ENCODE measurements at regions of chr12 and their contacts with region 1.

Region 1: DNA sequence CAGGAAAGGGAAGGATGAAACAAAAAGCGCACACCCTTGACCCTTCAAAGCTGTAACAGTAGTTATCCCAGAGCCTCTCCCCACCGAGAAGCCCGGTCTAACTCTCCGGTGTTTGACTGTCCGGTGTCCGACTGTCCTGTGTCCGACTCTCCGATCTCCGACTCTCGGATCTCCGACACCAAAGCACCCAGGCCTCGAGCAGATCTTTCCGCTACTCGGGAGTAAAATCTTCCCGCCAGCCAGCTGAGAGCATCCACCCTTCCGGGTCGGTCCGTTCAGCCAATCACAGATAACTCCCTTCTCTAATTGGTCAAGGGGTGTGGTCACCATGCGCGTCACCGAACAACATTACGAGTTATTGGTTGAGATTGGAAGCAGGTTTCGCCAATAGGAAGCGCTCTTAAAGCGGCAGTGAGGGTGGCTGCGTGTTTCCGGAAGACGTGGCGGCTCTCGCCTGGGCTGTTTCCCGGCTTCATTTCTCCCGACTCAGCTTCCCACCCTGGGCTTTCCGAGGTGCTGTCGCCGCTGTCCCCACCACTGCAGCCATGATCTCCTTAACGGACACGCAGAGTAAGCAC is at the starts of genes GOLT1B and RECQL:
- DNase-seq: peak; percentile 98
- ATAC-seq: peak; percentile 95
- H3K4me3 ChIP-seq: peak within 1 kb of the TSS; percentile 87 to 95 (median 95)
- H3K27ac ChIP-seq: peak within 1 kb of the TSS; percentile 90
- H3K4me1 ChIP-seq: peaks cover 33% of the 10 kb centered on the region
- H3K27me3 ChIP-seq: no peaks in the 10 kb centered on the region; a peak in 1 of 5 replicates
- CTCF ChIP-seq: no peak
- EP300 ChIP-seq: 0 out of 4 replicates have a peak, but pooled peaks of 1 of the 2 experiments have one; percentile 19
- POLR2A ChIP-seq: peak; percentile 48 to 92
- RAD21 ChIP-seq: no peak
- total RNA-seq, gene GOLT1B: 38.4 and 55.5 TPM in 2 replicates
- total RNA-seq, gene RECQL: 41.5 and 71.8 TPM in 2 replicates

Region 2: GRCh38 chr12:21308785-21309184 is 192.7 kb before region 1 on chr12:
- CTCF ChIA-PET with region 1: no interaction called
- POLR2A ChIA-PET with region 1: no interaction called
- in situ Hi-C with region 1: no loop called
- intact Hi-C with region 1: loop called (anchors 1 kb)
- DNase-seq: no peak
- ATAC-seq: no peak
- H3K4me3 ChIP-seq: no peak overlapping the region
- H3K27ac ChIP-seq: no peak overlapping the region
- H3K4me1 ChIP-seq: no peaks in the 10 kb centered on the region
- H3K27me3 ChIP-seq: no peaks in the 10 kb centered on the region
- CTCF ChIP-seq: no peak
- EP300 ChIP-seq: no peak
- POLR2A ChIP-seq: no peak
- RAD21 ChIP-seq: no peak

Region 3: DNA sequence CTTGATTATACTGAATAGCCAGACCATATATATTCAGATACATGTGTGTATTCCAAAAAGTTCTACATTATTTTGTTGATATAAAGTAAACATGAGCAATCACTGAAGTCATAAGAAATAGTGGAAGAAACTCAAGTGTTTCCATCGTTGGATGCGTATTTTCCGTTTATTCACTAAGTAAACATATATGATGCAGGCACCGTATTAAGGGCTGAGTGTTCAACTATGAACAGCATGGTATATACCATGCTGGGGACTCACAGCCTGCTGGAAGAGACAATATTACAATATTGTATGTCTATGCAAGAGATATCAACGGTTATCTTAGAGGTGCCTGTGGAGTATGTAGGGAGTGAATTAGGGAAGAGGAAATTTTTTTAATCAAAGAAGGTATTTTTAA is 62.8 kb before region 1 on chr12:
- CTCF ChIA-PET with region 1: no interaction called
- POLR2A ChIA-PET with region 1: interaction called, 7 read pairs
- in situ Hi-C with region 1: no loop called
- intact Hi-C with region 1: loop called (anchors 1 kb)
- DNase-seq: no peak
- ATAC-seq: no peak
- H3K4me3 ChIP-seq: peak overlapping the region; percentile 78 to 80 (median 79)
- H3K27ac ChIP-seq: no peak overlapping the region
- H3K4me1 ChIP-seq: peaks cover 19% of the 10 kb centered on the region
- H3K27me3 ChIP-seq: peaks cover 1 to 11% of the 10 kb centered on the region in 2 experiments; a peak in 2 of 5 replicates
- CTCF ChIP-seq: no peak
- EP300 ChIP-seq: no peak
- POLR2A ChIP-seq: no peak
- RAD21 ChIP-seq: no peak

Region 4: DNA sequence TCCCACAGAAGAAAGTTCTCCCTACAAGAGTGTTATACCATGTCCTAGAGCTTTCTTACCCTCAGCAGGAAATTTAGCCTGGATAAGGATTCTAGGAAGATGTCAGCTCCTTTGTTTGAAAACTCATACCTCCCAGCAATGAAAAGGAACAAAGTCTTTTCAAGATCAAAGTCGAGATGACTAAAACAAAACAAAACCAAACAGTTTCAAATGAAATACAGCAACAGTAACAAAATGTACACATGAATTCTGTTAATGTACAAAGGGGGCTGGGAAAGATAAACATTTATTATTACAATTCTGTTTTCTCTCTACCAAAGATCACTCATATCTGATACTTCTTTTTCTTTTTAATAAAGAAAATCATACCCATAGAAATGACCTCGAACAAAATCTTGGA is 61.4 kb after region 1 on chr12:
- CTCF ChIA-PET with region 1: no interaction called
- POLR2A ChIA-PET with region 1: no interaction called
- in situ Hi-C with region 1: no loop called
- intact Hi-C with region 1: loop called (anchors 2 kb)
- DNase-seq: peak; percentile 37
- ATAC-seq: peak; percentile 70
- H3K4me3 ChIP-seq: no peak overlapping the region; a peak in 2 of 6 replicates
- H3K27ac ChIP-seq: peak overlapping the region; percentile 66
- H3K4me1 ChIP-seq: peaks cover 60% of the 10 kb centered on the region
- H3K27me3 ChIP-seq: no peaks in the 10 kb centered on the region
- CTCF ChIP-seq: no peak
- EP300 ChIP-seq: peak in 1 of 2 experiments; percentile 81; a peak in 2 of 4 replicates
- POLR2A ChIP-seq: no peak
- RAD21 ChIP-seq: no peak

Region 5: DNA sequence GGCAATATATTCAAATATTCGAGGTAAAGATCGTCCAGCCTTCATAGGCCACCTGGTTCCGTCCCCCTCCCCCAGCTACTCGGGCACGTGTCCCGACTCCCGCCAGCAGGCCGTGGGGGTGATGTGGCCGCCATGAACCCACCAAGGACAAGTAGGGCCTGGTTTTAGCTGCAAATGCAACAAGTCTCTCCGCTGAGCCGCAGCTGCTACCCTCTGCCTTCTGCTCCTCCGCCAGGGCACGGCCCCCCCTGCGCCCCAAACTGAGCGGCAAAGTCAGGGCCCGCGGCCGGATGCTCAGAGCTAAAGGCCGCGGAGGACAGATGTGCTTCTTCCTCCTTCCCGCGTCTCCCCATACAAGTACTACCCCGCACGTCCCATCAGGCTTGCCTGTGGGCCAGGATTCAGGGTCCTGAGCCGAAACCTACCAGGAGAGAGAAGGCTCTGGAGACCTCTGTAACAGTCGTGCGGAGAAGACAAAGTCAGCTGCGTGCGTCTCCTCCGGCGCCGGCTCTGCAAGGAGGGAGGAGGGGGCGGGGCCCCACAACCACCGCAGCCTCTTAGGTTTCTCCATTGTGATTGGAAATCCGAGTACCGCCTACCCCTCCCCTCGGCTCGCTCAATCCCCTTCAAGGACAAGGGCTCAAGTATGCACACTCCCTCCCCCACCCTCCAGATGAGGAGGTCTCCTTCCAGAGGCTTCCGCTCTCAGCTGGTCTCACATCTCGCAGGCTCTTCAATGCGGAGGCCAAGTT is 156.0 kb after region 1 on chr12 and contains the start of gene LDHB:
- CTCF ChIA-PET with region 1: no interaction called
- POLR2A ChIA-PET with region 1: no interaction called
- in situ Hi-C with region 1: no loop called
- intact Hi-C with region 1: loop called (anchors 10 kb)
- DNase-seq: no peak
- ATAC-seq: no peak
- H3K4me3 ChIP-seq: no peak within 1 kb of the TSS
- H3K27ac ChIP-seq: no peak within 1 kb of the TSS
- H3K4me1 ChIP-seq: no peaks in the 10 kb centered on the region
- H3K27me3 ChIP-seq: no peaks in the 10 kb centered on the region
- CTCF ChIP-seq: no peak
- EP300 ChIP-seq: no peak
- POLR2A ChIP-seq: no peak
- RAD21 ChIP-seq: no peak
- total RNA-seq, gene LDHB: not detected in 2 replicates

Region 6: DNA sequence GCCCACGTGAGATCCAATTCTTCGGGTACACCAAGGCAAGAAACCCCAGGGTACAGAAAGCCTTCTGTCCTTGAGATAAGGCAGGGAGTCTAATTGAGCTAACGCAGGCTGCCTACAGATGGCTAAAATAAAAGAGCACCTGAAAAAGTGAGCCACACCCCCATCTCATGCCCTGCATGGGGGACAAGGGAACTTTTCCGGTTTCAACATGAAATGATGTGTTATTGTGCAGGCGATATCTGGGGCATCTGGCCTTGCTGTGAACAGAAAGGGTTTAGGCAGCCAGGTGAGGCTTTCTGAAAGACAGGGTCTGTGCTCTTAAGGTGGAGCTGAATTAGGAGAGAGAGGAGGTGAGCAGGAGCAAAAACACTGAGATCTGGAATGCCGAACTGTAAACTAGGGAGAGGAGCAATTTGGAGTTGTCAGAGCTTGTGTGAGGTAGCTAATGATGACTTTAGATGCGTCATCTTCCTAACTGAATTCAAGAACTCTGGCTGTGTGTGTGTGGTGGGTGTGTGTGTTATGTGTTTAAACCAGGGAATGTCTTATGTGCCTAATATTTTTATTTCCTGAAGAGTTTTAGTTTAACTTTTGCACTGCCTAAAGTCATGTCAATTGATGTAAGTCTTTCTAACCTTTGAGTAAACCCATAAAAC is 176.3 kb after region 1 on chr12:
- CTCF ChIA-PET with region 1: no interaction called
- POLR2A ChIA-PET with region 1: no interaction called
- in situ Hi-C with region 1: no loop called
- intact Hi-C with region 1: loop called (anchors 1 kb)
- DNase-seq: no peak
- ATAC-seq: no peak
- H3K4me3 ChIP-seq: no peak overlapping the region
- H3K27ac ChIP-seq: no peak overlapping the region
- H3K4me1 ChIP-seq: no peaks in the 10 kb centered on the region
- H3K27me3 ChIP-seq: no peaks in the 10 kb centered on the region; a peak in 1 of 5 replicates
- CTCF ChIP-seq: no peak
- EP300 ChIP-seq: no peak
- POLR2A ChIP-seq: no peak
- RAD21 ChIP-seq: no peak

Region 7: DNA sequence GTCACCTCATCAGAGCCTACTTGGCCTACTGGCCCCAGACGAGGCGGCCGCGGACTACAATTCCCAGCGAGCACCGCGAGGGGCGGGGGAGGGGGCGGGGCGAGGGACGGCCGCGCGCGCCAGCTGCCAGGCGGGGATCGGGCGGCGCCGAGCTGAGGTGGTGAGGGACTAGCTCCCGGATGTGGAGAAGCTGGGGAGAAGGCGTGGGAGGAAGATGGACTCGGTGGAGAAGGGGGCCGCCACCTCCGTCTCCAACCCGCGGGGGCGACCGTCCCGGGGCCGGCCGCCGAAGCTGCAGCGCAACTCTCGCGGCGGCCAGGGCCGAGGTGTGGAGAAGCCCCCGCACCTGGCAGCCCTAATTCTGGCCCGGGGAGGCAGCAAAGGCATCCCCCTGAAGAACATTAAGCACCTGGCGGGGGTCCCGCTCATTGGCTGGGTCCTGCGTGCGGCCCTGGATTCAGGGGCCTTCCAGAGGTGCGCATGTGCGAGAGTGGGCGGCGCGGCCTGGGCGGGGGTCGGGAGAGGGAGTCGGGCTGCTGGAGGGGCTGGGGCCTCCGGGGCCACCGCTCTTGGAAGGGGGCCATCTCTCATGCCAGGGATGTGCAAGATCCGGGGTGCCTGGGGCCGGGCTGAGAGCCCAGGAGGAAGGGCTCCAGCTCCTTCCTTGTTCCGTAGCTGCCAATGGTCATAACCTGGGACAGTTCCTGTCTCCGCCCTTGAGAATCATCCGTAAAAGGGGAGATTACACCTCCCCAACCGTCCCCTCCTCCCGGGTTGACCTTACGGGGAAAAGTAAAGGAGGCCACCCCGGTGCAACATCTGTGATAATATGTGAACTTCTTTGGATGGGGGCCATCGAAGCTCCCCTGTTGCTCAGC is 544.9 kb after region 1 on chr12 and contains the start of gene CMAS:
- CTCF ChIA-PET with region 1: no interaction called
- POLR2A ChIA-PET with region 1: no interaction called
- in situ Hi-C with region 1: loop called (anchors 25 kb)
- intact Hi-C with region 1: no loop called
- DNase-seq: peak; percentile 36
- ATAC-seq: peak; percentile 88
- H3K4me3 ChIP-seq: peak within 1 kb of the TSS; percentile 97 to 99 (median 98)
- H3K27ac ChIP-seq: peak within 1 kb of the TSS; percentile 76
- H3K4me1 ChIP-seq: peaks cover 76% of the 10 kb centered on the region
- H3K27me3 ChIP-seq: no peaks in the 10 kb centered on the region; a peak in 1 of 5 replicates
- CTCF ChIP-seq: no peak
- EP300 ChIP-seq: no peak
- POLR2A ChIP-seq: peak; percentile 30 to 75; a peak in 3 of 4 replicates
- RAD21 ChIP-seq: peak; percentile 16; the same call in 1 of the 2 replicates
- total RNA-seq, gene CMAS: 21.3 and 36.9 TPM in 2 replicates

Measured in HepG2 (cell line).